ENCODE measurements at regions of chrX and their contacts with region 1.

Region 1: DNA sequence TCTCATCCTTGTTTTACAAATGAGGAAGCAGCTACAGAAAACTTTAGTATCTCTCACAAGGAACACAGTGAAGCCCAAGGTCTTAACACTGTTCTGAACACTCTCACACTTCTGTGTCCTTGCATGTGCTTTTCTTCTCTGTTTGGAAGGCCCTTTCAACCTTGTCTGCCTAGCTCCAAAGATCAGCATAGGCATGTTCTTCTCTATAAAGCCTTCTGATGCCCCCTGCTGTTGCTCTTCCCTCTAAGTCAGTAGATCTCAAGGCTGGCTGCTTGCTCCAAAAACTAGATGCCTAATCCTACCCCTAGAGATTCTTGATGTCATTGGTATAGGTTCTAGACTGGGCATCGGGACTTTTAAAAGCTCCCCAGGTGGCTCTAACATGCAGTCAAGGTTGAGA is 5.9 kb downstream of the APOO start:
- DNase-seq: peak; percentile 49
- H3K4me3 ChIP-seq: no peak overlapping the region
- H3K27ac ChIP-seq: no peak overlapping the region
- H3K27me3 ChIP-seq: no peaks in the 10 kb centered on the region
- CTCF ChIP-seq: peak; percentile 60

Region 2: DNA sequence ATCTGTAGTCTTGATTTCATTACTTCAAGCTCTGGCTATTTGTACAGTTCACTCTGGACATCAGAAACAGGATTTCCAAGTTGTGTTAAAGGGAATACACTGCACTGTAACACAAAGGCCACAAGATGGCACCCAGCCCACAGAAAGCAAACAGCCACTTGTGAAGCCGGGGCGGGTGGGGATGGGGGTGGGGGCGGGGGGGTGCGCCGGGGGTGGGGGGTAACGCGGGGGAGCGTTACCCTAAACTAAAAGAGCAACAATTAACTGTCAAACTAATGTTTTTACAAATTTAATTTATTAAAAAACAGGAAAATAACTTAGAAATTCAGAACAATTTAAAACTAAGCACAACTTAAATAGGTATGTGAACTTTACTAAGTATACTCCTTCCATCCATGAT is 207.2 kb before region 1 on chrX:
- CTCF ChIA-PET with region 1: interaction called, 102 read pairs
- POLR2A ChIA-PET with region 1: no interaction called
- DNase-seq: peak; percentile 16
- H3K4me3 ChIP-seq: no peak overlapping the region
- H3K27ac ChIP-seq: no peak overlapping the region
- H3K27me3 ChIP-seq: no peaks in the 10 kb centered on the region
- CTCF ChIP-seq: peak; percentile 56

Region 3: GRCh38 chrX:23704673-23705206 is 197.1 kb before region 1 on chrX:
- CTCF ChIA-PET with region 1: interaction called, 27 read pairs
- POLR2A ChIA-PET with region 1: no interaction called
- DNase-seq: no peak
- H3K4me3 ChIP-seq: no peak overlapping the region
- H3K27ac ChIP-seq: no peak overlapping the region
- H3K27me3 ChIP-seq: no peaks in the 10 kb centered on the region
- CTCF ChIP-seq: no peak

Region 4: DNA sequence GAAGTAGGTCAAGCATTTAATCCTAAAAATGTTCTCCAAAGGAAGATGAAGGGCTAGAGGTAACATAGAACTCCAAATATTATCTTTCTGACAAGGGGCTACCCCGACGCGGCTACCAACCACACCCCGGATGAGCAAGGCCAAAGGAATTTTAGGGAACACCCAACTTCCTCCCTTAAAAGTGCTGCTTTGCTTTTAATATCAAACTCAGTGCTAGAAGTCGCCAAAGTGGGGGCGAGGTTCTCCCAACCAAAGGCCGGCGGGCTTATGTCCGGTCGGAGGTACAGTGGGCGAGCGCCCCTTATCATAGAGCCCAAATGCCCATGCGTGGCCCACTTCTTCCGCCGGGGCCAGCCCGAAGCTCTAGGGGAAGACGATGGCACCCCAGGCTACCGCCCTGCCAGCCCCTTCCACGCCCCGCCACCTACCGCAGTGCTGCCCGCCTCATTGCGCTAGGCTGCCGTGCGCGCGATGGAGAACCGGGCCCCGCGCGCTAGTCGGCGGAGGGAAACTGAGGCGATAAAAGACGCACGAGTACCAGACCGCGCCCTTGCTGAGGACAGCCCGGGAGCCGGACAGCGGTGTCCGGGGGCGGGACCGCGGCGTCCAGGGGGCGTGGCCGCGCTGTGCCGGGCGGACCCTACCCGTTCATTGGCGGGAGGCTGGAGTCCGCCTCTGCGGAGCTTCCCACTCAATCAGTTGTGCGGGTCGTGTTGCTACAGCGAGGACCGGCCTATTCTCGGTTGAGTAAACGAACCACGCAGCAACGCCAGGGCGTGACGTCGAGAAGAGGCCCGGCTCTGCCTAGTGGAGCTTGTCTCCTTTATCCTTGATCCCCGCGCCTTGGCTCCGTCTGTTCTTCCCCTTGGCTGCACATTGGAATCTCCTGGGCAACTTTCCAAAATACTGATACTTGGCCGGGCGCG is 158.8 kb before region 1 on chrX and contains the start of gene ACOT9:
- CTCF ChIA-PET with region 1: interaction called, 33 read pairs
- POLR2A ChIA-PET with region 1: interaction called, 7 read pairs
- DNase-seq: peak; percentile 89
- H3K4me3 ChIP-seq: peak within 1 kb of the TSS; percentile 75
- H3K27ac ChIP-seq: peak within 1 kb of the TSS; percentile 87
- H3K27me3 ChIP-seq: no peaks in the 10 kb centered on the region
- CTCF ChIP-seq: no peak
- polyA plus RNA-seq, gene ACOT9: 45.7 and 62.5 TPM in 2 replicates

Region 5: DNA sequence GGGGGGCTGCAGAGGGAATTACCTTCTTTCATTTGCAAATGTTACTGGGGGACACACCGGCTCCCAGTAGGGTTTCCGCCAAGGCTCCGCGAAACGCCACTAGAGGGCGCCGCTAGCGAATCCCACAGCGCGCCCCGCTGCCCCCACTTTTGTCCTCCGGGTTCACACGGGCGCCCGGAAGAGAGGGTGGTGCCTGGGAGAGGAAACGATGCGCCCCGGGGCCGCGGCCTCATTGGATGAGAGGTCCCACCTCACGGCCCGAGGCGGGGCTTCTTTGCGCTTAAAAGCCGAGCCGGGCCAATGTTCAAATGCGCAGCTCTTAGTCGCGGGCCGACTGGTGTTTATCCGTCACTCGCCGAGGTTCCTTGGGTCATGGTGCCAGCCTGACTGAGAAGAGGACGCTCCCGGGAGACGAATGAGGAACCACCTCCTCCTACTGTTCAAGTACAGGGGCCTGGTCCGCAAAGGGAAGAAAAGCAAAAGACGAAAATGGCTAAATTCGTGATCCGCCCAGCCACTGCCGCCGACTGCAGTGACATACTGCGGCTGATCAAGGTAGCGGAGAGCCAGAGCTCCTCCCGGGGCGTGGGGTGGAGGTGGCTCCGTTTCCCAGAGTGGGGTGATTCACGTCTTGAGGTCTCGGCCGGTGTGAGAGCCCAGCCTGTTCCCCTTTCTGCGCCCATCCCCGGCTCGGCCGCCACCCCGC is 118.8 kb before region 1 on chrX and contains the start of gene SAT1:
- CTCF ChIA-PET with region 1: interaction called, 63 read pairs
- POLR2A ChIA-PET with region 1: interaction called, 60 read pairs
- DNase-seq: peak; percentile 83
- H3K4me3 ChIP-seq: peak within 1 kb of the TSS; percentile 82
- H3K27ac ChIP-seq: peak within 1 kb of the TSS; percentile 93
- H3K27me3 ChIP-seq: no peaks in the 10 kb centered on the region
- CTCF ChIP-seq: peak; percentile 70
- polyA plus RNA-seq, gene SAT1: 151 and 202 TPM in 2 replicates

Region 6: GRCh38 chrX:24054182-24055042 is 152.6 kb after region 1 on chrX and contains the start of gene EIF2S3:
- CTCF ChIA-PET with region 1: interaction called, 15 read pairs
- POLR2A ChIA-PET with region 1: interaction called, 4 read pairs
- DNase-seq: peak; percentile 86
- H3K4me3 ChIP-seq: no peak within 1 kb of the TSS
- H3K27ac ChIP-seq: peak within 1 kb of the TSS; percentile 90
- H3K27me3 ChIP-seq: no peaks in the 10 kb centered on the region
- CTCF ChIP-seq: peak; percentile 55
- polyA plus RNA-seq, gene EIF2S3: 117 and 139 TPM in 2 replicates